Common myeloid progenitor, CD34-positive (primary cell): ENCODE measurements at regions of chr1 and their contacts with region 1.

Region 1: DNA sequence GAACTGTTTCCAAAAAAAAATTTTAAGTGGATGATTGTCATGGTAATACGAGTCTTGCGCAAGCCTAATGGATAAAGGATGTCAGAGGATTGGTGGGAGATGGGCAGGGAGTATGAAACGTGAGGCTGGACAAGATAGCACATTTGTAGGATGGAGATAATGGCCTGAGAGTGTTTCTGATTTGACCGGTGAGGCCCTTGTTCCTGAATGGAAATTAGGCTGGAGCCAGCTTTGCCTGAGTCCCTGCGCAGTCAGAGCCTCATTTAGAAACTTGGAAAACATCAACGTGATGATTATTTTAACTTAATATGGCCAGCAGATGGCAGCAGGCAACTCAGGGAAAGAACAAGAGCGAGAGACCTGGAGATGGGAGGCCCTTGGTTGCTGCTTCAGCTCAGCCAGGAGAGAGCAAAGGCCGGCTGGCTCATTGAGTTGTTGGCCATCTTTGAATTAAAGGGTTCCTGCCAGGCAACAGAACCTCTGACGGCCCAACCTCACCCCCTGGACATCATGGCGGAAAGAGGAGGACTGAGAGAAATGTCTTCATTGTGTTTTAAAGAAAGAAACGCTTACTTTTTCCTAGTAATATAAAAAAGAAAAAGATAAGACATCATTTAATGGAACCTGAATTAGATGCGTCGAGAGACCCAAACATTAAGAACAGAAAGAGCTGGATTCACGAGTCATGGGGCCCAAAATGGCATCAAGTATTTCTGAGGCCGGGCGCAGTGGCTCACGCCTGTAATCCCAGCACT is 80.3 kb downstream of the SELENOF start:
- DNase-seq: peak; percentile 82 to 89 (median 84)
- H3K4me3 ChIP-seq: no peak overlapping the region
- H3K27ac ChIP-seq: no peak overlapping the region
- H3K4me1 ChIP-seq: no peaks in the 10 kb centered on the region
- H3K27me3 ChIP-seq: no peaks in the 10 kb centered on the region

Region 2: GRCh38 chr1:86731416-86731815 is 102.2 kb before region 1 on chr1:
- CTCF ChIA-PET with region 1: no interaction called
- POLR2A ChIA-PET with region 1: no interaction called
- DNase-seq: no peak
- H3K4me3 ChIP-seq: no peak overlapping the region
- H3K27ac ChIP-seq: peak overlapping the region in 1 of 2 experiments; percentile 6
- H3K4me1 ChIP-seq: peaks cover 0 to 2% (median under 1%) of the 10 kb centered on the region in 4 experiments
- H3K27me3 ChIP-seq: no peaks in the 10 kb centered on the region

Region 3: DNA sequence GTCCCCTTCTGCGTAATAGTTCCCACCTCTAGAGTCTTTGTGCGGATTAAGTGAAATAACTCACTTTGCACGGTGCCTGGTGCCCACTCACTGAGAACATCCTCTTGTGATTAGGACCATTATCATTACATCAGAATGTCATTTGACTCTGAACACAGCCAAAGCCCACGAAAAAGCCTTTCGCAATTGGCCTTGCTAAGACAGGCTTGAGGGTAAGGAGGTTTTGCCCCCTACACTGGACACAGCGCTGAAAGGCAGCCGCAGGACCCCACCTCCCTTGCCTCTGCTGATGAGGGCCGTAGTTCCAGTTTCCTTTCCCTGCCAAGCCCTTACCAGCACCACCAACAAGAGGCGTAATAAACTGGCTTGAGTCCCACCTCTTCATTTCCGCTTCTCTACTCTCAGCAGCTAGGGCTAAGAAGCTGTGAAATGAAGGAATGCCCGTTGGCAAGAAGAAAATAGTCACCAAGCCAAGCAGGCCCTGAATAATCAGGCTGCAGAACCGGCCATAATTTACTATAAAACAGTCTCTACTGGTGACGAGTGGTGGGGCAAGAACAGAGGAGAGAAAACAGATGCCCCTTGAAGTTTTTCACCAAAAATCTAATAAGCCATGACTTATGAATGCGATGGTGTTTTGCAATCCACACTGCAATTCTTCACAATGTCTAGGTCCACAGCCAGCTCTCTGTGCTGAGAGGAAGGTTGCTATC is 76.2 kb before region 1 on chr1:
- CTCF ChIA-PET with region 1: no interaction called
- POLR2A ChIA-PET with region 1: no interaction called
- DNase-seq: no peak
- H3K4me3 ChIP-seq: no peak overlapping the region
- H3K27ac ChIP-seq: no peak overlapping the region
- H3K4me1 ChIP-seq: peaks cover 0 to 6% (median 1%) of the 10 kb centered on the region in 4 experiments
- H3K27me3 ChIP-seq: no peaks in the 10 kb centered on the region

Region 4: DNA sequence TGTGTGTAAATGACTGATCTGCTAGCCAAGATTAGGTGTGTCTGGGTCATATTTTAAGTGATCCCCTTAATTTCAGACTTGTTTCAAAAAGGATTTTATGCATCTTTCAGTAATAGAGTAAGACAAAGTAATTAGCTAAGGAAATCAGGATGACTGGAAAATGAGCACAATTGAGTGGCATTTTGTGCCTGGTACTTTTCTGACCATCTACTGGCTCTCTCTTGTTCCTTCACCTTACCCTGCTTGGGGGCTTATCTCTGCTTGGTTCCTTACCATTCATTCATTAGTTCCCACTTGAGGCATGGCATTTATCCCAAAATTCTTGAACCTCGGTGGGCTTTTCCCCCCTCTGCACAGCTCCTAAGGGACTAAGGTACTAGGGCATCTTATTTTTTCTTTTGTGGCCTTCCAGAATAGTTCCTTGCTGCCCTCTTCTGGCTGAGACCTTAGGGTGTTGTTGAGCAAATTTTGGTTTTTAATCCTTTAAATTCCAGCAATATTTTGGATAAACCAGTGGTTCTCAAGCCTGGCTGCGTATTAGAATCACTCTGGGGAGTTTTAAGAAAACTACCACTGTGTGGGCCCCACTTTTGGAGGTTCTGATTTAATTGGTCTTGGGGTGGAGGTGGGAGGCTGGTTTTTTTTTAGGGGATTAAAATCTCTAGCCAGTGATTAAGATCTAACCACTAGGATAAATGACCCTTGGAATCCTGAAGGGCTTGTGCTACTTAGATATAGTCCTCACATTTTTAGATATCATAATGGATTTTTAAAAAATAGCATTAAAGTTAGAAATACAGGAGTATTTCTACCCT is 131.6 kb after region 1 on chr1:
- CTCF ChIA-PET with region 1: interaction called, 24 read pairs
- POLR2A ChIA-PET with region 1: no interaction called
- DNase-seq: peak; percentile 38 to 53 (median 43)
- H3K4me3 ChIP-seq: no peak overlapping the region
- H3K27ac ChIP-seq: no peak overlapping the region
- H3K4me1 ChIP-seq: peaks cover 0 to 3% (median 0%) of the 10 kb centered on the region in 4 experiments
- H3K27me3 ChIP-seq: no peaks in the 10 kb centered on the region

Region 5: GRCh38 chr1:87084244-87084836 is 250.7 kb after region 1 on chr1:
- CTCF ChIA-PET with region 1: interaction called, 11 read pairs
- POLR2A ChIA-PET with region 1: no interaction called
- DNase-seq: peak; percentile 37 to 61 (median 53)
- H3K4me3 ChIP-seq: no peak overlapping the region
- H3K27ac ChIP-seq: no peak overlapping the region
- H3K4me1 ChIP-seq: no peaks in the 10 kb centered on the region
- H3K27me3 ChIP-seq: no peaks in the 10 kb centered on the region